ENCODE measurements at regions of chr10 and their contacts with region 1.

Region 1: GRCh38 chr10:93475861-93476269 is 6.3 kb downstream of the MYOF start:
- DNase-seq: no peak
- ATAC-seq: peak in 1 of 2 donors; percentile 46
- H3K4me3 ChIP-seq: no peak overlapping the region
- H3K27ac ChIP-seq: no peak overlapping the region
- H3K4me1 ChIP-seq: no peaks in the 10 kb centered on the region
- H3K27me3 ChIP-seq: no peaks in the 10 kb centered on the region

Region 2: GRCh38 chr10:93015722-93016121 is 460.1 kb before region 1 on chr10:
- intact Hi-C with region 1: no loop called
- DNase-seq: no peak
- ATAC-seq: no peak
- H3K4me3 ChIP-seq: no peak overlapping the region
- H3K27ac ChIP-seq: no peak overlapping the region
- H3K4me1 ChIP-seq: no peaks in the 10 kb centered on the region
- H3K27me3 ChIP-seq: no peaks in the 10 kb centered on the region

Region 3: DNA sequence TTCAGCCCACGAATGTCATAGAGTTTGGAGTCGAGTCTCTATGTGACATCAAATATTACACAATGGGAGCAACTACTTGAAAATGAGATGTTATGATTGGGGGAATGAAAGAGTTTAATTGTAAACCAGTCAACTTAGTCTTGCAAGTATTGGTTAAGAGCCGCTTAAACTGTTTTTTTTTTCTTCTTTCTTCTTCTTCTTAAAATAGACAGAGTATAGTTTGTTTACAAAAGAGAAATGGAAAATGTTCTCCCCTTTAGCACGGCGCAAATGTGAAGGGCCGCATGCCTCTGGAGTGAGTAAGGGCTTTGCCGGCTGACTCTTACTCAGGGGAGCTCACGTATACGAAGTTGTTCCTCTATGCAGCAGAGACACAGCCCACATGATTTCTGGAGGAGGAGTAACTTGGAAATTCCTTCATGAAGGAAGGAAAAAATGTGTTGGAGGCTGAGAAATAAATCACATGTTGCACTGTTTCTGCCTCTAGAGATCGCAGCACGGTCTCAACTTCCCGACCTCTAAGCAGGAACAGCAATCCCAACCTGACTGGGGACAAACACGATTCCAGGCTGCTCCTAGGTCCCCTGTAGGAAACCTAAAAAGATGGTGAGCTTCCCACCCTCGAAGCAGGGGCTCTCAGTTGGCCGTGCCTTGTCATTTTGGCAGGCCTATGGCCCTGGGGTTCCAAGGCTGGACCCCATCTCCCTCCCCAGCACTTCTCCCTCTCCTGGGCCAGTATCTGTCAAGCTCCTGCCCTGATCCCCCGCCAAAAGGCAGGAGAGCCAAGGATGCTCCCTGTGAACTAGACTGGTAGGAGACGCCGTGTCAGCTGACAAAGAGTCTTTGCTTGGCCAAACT is 38.5 kb before region 1 on chr10:
- intact Hi-C with region 1: loop called in 1 of 4 experiments (anchors 5 kb)
- DNase-seq: peak; percentile 78 to 85 (median 80)
- ATAC-seq: peak; percentile 96 to 97
- H3K4me3 ChIP-seq: no peak overlapping the region
- H3K27ac ChIP-seq: peak overlapping the region; percentile 100
- H3K4me1 ChIP-seq: peaks cover 17% of the 10 kb centered on the region
- H3K27me3 ChIP-seq: no peaks in the 10 kb centered on the region

Region 4: GRCh38 chr10:93697207-93697606 is 221.3 kb after region 1 on chr10:
- intact Hi-C with region 1: no loop called
- DNase-seq: no peak
- ATAC-seq: no peak
- H3K4me3 ChIP-seq: no peak overlapping the region
- H3K27ac ChIP-seq: no peak overlapping the region
- H3K4me1 ChIP-seq: no peaks in the 10 kb centered on the region
- H3K27me3 ChIP-seq: no peaks in the 10 kb centered on the region

Region 5: DNA sequence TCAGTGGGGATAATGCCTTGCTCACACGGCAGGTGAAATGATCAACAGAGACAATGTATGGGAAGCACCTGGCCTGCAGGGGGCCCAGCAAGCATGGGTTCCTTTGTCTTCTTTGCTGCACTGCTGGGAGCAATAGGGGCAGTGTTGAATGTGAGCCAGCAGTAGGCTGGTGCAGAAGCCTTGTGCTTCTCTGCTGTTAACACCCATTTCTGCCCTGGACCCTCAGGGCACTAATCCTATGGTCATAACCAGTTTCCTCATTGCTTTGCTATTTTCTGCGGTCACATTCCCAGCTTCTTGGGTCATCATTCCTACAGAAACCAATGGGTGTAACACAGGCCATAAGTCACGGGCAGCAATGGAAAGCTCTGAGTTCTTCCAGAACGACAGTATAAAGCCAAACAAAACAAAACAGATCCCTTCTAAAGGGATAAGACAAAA is 271.0 kb after region 1 on chr10:
- intact Hi-C with region 1: no loop called
- DNase-seq: no peak
- ATAC-seq: peak; percentile 76 to 77
- H3K4me3 ChIP-seq: no peak overlapping the region
- H3K27ac ChIP-seq: peak overlapping the region; percentile 12
- H3K4me1 ChIP-seq: peaks cover under 1% of the 10 kb centered on the region
- H3K27me3 ChIP-seq: no peaks in the 10 kb centered on the region